PC-3 (cell line): ENCODE measurements at regions of chr19 and their contacts with region 1.

Region 1: DNA sequence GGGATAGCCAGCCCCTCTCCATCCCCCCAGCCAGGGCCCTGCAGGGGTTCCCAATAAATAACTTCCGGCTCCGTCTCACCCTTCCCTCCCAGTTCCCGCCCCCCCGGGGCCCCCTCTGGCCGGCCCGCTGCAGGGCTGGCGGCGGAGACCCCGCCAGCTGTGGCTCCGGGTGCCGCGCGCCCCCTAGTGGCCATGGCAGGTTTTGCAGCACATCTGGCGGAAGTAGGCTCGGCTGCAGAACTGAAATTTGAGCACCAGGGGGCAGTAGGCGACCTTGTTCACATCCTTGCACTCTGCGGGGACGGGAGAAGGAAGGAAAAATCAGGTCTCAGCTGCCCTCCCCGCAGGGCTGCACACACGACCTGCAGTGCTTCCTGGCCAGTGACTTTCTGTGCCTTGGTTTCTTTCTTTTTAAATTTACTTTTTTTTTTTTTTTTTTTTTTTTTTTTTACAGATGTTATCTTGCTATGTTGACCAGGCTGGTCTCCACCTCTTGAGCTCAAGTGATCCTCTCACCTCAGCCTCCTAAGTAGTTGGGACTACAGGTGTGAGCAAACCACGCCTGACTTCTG is 3.6 kb upstream of the MYO1F start:
- DNase-seq: peak; percentile 83
- ATAC-seq: peak; percentile 58
- H3K4me3 ChIP-seq: no peak overlapping the region
- H3K27ac ChIP-seq: no peak overlapping the region
- H3K4me1 ChIP-seq: peaks cover under 1% of the 10 kb centered on the region; the same call in 1 of the 2 replicates
- H3K27me3 ChIP-seq: no peaks in the 10 kb centered on the region
- CTCF ChIP-seq: peak; percentile 100

Region 2: GRCh38 chr19:8355631-8356402 is 225.0 kb before region 1 on chr19:
- CTCF ChIA-PET with region 1: interaction called, 9 read pairs
- POLR2A ChIA-PET with region 1: no interaction called
- intact Hi-C with region 1: loop called (anchors 10 kb)
- DNase-seq: peak; percentile 97
- ATAC-seq: peak; percentile 93
- H3K4me3 ChIP-seq: no peak overlapping the region
- H3K27ac ChIP-seq: peak overlapping the region; percentile 50
- H3K4me1 ChIP-seq: peaks cover 21% of the 10 kb centered on the region
- H3K27me3 ChIP-seq: no peaks in the 10 kb centered on the region
- CTCF ChIP-seq: 0 out of 2 replicates have a peak, but pooled peaks have one; percentile 19

Region 3: DNA sequence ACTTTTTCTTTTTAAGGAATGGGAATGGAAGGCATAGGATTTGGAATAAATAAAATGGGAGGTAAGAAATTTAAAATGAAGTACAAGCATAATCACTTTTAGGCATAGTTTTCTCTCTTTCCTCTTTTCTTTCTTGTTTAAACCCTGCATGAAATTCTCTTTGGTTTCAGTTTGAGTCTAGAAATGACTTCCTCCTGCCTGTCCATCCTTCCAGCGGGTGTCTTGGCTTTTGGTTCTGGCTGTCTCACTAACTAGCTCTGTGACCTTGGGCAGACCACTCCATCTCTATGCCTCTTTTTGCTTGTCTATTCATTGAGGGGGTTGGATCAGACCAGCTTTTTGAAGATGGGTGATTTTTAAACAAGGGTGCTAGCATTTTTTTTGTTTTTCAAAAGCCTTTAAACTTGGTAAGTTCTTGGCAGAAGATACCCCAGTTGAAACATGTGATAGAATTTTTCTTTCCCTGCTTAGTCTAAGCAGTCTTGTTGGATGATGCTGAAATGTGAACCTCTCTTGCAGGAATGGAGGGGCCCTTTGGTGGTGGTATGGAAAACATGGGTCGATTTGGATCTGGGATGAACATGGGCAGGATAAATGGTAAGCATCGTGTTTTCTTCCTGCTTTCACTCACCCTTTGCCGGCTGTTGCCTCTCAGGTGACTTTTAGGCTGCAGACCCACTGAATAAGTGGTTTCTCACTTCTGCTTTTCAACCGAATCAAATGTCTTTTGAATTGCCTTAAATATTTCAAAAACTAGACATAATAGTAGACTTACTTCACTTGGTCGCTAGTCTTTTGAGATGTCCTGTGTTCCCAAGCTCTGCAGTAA is 106.9 kb before region 1 on chr19:
- CTCF ChIA-PET with region 1: interaction called, 9 read pairs
- POLR2A ChIA-PET with region 1: interaction called, 10 read pairs
- intact Hi-C with region 1: no loop called
- DNase-seq: no peak
- ATAC-seq: no peak
- H3K4me3 ChIP-seq: no peak overlapping the region
- H3K27ac ChIP-seq: no peak overlapping the region
- H3K4me1 ChIP-seq: no peaks in the 10 kb centered on the region
- H3K27me3 ChIP-seq: no peaks in the 10 kb centered on the region
- CTCF ChIP-seq: no peak

Region 4: DNA sequence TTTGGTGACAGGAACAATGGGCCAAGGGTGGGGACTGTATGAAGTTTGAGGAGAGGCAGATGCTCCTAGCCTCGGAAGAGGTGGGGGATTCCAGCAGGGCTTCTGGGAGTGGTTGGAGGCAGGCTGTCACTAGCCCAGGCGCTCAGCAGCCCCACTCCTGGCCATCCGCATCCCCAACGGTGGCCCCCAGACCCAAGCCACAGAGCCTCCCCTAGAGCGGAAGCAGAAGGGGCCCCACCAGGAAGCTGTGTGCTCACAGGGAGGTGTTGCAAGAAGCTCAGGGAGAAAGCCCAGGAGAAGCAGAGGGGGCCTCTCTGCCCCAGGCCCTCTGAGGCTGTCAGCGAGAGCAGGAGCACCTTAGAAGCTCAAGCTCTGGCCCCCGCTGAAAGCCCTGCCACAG is 86.6 kb before region 1 on chr19:
- CTCF ChIA-PET with region 1: no interaction called
- POLR2A ChIA-PET with region 1: no interaction called
- intact Hi-C with region 1: no loop called
- DNase-seq: no peak
- ATAC-seq: no peak
- H3K4me3 ChIP-seq: no peak overlapping the region
- H3K27ac ChIP-seq: no peak overlapping the region
- H3K4me1 ChIP-seq: no peaks in the 10 kb centered on the region
- H3K27me3 ChIP-seq: no peaks in the 10 kb centered on the region
- CTCF ChIP-seq: no peak

Region 5: DNA sequence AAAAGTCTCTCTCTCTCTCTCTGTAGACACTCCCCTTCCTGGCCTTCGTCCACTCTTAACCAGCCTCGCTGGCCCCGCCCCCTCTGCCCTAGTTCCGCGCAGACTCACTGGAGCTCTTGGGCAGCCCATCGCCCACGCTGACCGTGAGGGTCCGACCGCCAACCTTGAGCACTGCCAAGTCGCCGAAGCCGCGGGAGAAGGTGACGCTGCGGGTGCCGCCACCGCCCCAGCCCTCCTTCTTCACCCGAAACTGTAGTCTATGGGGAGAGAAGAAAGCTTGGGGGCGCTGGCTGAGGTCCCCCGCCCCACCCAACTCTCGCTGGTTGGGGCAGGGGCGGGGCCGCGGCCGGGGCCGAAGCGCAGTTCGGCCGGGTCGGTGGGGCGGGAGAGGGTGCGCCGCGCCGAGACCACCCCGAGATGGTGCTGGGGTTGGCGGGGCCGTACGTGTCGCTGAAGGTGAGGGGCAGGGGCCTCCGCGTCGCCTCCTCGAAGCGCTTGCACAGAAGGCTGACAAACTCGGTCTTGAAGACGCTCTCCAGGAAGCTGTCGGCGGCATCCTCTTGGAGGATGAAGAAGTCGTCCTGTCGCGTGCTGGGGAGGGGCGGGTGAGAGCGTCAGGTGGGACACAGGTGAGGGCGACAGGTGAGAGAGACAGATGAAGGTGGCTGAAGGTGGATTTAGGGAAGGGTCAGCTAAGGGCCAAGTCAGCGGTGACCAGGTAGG is 54.3 kb before region 1 on chr19:
- CTCF ChIA-PET with region 1: interaction called, 15 read pairs
- POLR2A ChIA-PET with region 1: interaction called, 12 read pairs
- intact Hi-C with region 1: no loop called
- DNase-seq: peak; percentile 95
- ATAC-seq: peak; percentile 67
- H3K4me3 ChIP-seq: peak overlapping the region; percentile 85
- H3K27ac ChIP-seq: peak overlapping the region; percentile 63
- H3K4me1 ChIP-seq: peaks cover 10% of the 10 kb centered on the region
- H3K27me3 ChIP-seq: no peaks in the 10 kb centered on the region
- CTCF ChIP-seq: no peak

Region 6: GRCh38 chr19:8641908-8642547 is 61.2 kb after region 1 on chr19:
- CTCF ChIA-PET with region 1: interaction called, 10 read pairs
- POLR2A ChIA-PET with region 1: no interaction called
- intact Hi-C with region 1: loop called (anchors 2 kb)
- DNase-seq: peak; percentile 70
- ATAC-seq: peak; percentile 40; the same call in 1 of the 2 replicates
- H3K4me3 ChIP-seq: no peak overlapping the region
- H3K27ac ChIP-seq: no peak overlapping the region
- H3K4me1 ChIP-seq: peaks cover 8% of the 10 kb centered on the region
- H3K27me3 ChIP-seq: 0 out of 2 replicates have a peak, but pooled peaks cover 7% of the 10 kb centered on the region
- CTCF ChIP-seq: peak; percentile 71

Region 7: DNA sequence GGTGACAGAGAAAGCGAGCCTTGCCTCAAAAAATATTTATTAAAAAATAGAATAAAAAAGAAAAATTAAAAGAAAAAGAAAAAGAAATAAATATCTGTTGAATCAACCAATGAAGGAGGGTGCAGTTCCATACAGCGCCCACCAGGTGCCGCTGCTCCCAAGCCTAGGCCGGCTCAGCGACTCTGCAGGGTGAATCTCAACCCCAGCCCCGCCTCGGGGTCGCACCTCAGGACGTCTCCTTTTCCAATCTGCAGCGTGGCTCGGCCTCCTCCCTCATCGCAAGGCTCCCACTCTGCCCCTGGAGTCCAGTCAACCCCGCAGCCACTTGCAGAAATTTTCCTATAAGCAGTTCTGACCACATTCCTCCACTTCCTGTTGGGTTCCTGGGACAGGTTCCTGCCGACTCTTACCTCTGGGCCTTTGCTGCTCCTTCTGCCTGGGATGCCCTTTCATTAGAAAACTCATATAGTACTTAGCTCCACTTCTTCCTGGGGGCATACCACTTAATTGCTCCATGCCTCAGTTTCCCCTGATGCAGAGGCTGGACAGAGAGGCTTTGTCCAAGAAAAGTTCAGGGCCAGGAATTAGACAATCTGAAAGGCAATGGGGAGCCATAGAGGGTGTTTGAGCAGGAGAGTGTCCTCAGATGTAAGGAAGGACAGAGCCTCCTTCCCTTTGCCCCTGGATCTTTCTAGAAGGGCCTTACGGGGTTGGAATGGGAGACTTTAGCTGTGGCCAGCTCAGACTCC is 74.0 kb after region 1 on chr19:
- CTCF ChIA-PET with region 1: interaction called, 13 read pairs
- POLR2A ChIA-PET with region 1: no interaction called
- intact Hi-C with region 1: no loop called
- DNase-seq: peak; percentile 65
- ATAC-seq: peak; percentile 73
- H3K4me3 ChIP-seq: peak overlapping the region; percentile 37; the same call in 1 of the 2 replicates
- H3K27ac ChIP-seq: no peak overlapping the region
- H3K4me1 ChIP-seq: no peaks in the 10 kb centered on the region
- H3K27me3 ChIP-seq: peaks cover 56% of the 10 kb centered on the region
- CTCF ChIP-seq: peak; percentile 86